Body of pancreas (tissue), 4 donors: ENCODE measurements at regions of chr6 and their contacts with region 1.

Region 1: DNA sequence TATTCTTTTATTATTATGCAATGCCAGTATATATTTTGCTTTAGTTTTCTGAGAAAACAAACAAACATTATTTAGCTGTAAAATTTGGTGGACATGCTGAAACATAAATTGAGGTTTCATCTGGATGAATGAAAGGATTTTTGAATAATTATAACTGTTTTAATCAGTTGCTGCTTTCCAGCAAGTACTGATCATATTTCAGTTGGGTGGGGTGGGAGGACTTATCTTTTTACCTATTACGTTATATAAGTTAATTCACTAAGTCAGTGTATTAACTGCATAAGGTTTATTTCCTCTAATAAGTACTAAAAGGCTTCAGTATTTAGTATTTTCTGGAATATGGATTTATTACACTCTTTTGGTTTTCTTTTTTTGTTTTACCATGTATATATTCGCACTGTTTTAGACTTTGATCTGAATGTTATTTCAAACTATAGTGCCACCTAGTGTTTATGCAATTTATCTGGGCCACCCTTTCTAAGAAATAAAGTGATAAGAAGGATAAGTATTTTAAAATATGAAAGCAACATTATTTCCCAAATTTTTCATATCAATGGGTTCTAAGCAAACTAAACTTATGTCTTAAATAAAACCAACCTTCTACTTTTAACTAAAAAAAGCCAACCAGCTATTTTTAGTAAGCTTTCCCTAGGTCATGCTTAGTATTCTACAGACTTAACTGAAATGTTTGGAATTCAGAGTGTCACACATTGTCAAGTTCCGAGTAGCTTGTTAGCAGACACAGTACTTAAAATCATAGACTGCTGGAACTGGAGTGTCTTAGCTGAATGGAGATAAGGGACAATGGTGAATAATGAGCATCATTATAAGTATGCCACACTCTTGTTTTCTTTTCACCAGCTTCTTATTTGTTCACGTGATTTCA is 105.4 kb upstream of the MCHR2 start:
- DNase-seq: no peak
- ATAC-seq: no peak
- H3K4me3 ChIP-seq: no peak overlapping the region
- H3K27ac ChIP-seq: no peak overlapping the region
- H3K4me1 ChIP-seq: no peaks in the 10 kb centered on the region
- H3K27me3 ChIP-seq: no peaks in the 10 kb centered on the region
- CTCF ChIP-seq: peak in 6 of 7 experiments; percentile 51 to 75 (median 61)
- POLR2A ChIP-seq: no peak

Region 2: DNA sequence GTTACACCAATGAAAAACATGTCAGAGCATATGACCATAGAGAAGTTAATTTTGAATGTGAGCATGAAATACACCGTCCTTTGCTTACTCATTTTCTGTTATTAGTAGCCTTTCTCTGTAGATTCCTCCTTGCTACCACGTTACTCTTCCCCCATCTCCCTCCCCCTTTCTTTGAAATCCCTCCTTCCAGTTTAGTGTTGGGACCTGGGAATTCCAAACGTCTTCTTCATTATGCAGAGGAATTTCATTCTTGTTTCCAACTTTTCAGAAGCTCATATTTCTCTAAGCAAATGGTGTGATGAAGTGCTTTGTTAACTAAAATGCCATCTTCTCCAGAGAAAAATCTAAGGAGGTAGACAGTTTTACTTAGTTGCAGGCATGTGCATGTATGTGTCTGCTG is 227.8 kb before region 1 on chr6:
- intact Hi-C with region 1: loop called (anchors 5 kb)
- DNase-seq: no peak
- ATAC-seq: no peak
- H3K4me3 ChIP-seq: no peak overlapping the region
- H3K27ac ChIP-seq: no peak overlapping the region
- H3K4me1 ChIP-seq: no peaks in the 10 kb centered on the region
- H3K27me3 ChIP-seq: no peaks in the 10 kb centered on the region
- CTCF ChIP-seq: no peak
- POLR2A ChIP-seq: no peak

Region 3: DNA sequence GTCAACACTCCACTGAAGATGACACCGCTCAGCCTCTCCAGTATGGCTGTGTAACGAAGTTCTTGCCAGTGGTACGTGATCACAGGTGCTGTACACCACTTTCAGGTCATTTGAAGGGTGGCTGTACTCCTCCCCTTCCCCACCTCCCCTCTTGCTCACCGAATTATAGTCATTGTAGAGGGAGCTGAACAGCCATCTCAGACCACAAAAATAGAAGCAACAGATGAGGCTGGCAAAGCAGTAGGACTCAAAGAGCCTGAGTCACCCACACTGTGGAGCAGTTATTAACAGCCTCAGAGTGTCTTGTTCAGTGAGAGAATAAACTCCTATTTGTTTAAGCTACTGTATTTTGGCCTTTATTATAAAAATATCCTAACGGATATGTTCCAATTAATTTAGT is 87.1 kb after region 1 on chr6:
- intact Hi-C with region 1: no loop called
- DNase-seq: no peak
- ATAC-seq: no peak
- H3K4me3 ChIP-seq: no peak overlapping the region
- H3K27ac ChIP-seq: no peak overlapping the region
- H3K4me1 ChIP-seq: no peaks in the 10 kb centered on the region
- H3K27me3 ChIP-seq: no peaks in the 10 kb centered on the region
- CTCF ChIP-seq: no peak
- POLR2A ChIP-seq: no peak

Region 4: DNA sequence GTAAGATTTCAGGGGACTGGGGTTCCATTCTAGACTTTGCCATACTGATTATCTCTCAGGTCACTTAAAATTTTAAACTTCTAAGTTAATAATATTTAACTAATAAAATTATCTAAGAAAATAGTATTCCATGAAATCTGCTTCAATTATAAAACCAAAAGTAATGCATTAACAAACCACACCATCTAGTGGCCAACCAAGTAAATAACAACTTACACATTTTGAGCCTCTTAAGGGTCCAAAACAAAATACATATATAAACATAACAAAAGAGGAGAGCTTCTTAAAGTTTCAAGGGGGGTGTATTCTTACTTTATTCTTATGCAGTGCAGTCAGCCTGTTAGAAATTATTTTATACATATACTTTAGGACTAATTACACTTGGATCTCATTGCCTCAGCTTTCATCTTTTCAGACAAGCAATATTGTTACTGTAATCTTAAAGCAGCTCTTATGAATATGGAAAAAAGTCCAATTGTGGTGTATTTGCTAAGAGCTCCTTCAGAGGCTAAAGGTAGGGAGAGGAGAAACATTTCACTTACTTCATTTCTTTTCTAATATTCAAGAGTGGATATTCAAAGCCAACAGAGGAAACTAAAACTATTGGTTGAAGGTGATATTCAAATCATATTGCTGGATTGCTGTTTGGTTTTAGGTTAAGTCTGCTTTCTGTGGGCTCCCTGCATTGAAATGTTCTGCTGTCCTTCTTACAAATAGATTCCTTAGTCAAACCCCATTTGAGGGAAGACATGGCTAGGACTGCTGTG is 565.0 kb after region 1 on chr6:
- intact Hi-C with region 1: loop called (anchors 10 kb)
- DNase-seq: peak in 1 of 4 donors; percentile 2
- ATAC-seq: no peak
- H3K4me3 ChIP-seq: no peak overlapping the region
- H3K27ac ChIP-seq: no peak overlapping the region
- H3K4me1 ChIP-seq: peaks cover 6% of the 10 kb centered on the region
- H3K27me3 ChIP-seq: no peaks in the 10 kb centered on the region
- CTCF ChIP-seq: peak; percentile 18 to 68 (median 59)
- POLR2A ChIP-seq: no peak